Activated CD4-positive, alpha-beta memory T cell treated with anti-CD3 and anti-CD28 coated beads, Interleukin-2, amount 10 ng/mL, durations not matched to agents 7 days and 5 days (primary cell): ENCODE measurements at regions of chr9 and their contacts with region 1.

Region 1: GRCh38 chr9:87324613-87325194 is 173.0 kb upstream of the DAPK1 start:
- DNase-seq: no peak
- H3K4me3 Mint-ChIP-seq: no peak overlapping the region
- H3K27ac Mint-ChIP-seq: no peak overlapping the region
- H3K4me1 Mint-ChIP-seq: no peaks in the 10 kb centered on the region
- H3K27me3 Mint-ChIP-seq: peaks cover 9% of the 10 kb centered on the region

Region 2: DNA sequence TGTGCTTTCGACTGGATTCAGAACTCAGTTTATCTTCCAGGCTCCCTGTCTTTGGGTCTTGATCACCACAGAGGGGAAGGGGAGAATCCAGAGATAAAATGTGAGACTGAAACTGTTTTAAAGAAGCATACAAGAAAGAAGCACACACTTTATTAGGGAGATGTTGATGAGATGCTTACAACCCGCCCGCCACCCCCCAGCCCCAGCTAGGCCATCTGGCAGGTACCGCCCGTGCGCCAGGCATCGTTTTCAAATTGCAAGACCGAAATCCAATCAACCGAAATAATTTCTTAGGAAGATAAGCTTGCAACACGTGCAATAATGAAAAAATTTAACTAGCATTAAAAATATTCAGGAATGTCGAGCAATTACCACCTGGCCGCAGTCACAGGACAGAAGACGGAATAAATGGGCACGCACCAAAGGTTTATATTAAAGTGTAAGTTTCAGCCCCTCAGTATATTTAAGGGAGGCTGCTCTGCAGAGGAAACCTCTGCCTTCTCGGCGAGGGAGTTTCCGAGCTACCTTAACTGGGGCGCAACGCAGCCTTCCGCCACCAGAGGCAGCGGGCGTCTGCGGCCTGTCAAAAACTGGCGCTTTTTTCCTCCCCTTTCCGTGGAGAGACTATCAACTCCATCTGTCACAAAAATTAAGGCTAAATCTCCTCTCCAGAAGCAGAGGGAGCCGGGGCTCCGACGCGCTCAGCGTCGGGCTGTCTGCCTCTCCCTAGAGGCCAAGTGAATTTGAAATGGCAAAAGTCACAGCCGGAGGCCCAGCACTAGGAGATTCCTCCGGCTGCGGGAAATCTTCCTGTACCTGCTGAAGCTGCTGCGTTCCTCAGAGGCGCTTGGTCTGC is 376.4 kb before region 1 on chr9:
- CTCF ChIA-PET with region 1: interaction called, 10 read pairs
- POLR2A ChIA-PET with region 1: no interaction called
- DNase-seq: peak; percentile 76
- H3K4me3 Mint-ChIP-seq: peak overlapping the region; percentile 78
- H3K27ac Mint-ChIP-seq: no peak overlapping the region
- H3K4me1 Mint-ChIP-seq: peaks cover 21% of the 10 kb centered on the region
- H3K27me3 Mint-ChIP-seq: peaks cover 25% of the 10 kb centered on the region

Region 3: GRCh38 chr9:87309236-87309635 is 15.5 kb before region 1 on chr9:
- CTCF ChIA-PET with region 1: no interaction called
- POLR2A ChIA-PET with region 1: no interaction called
- DNase-seq: no peak
- H3K4me3 Mint-ChIP-seq: no peak overlapping the region
- H3K27ac Mint-ChIP-seq: no peak overlapping the region
- H3K4me1 Mint-ChIP-seq: peaks cover 3% of the 10 kb centered on the region
- H3K27me3 Mint-ChIP-seq: no peaks in the 10 kb centered on the region